ENCODE measurements at regions of chr15 and their contacts with region 1.

Region 1: DNA sequence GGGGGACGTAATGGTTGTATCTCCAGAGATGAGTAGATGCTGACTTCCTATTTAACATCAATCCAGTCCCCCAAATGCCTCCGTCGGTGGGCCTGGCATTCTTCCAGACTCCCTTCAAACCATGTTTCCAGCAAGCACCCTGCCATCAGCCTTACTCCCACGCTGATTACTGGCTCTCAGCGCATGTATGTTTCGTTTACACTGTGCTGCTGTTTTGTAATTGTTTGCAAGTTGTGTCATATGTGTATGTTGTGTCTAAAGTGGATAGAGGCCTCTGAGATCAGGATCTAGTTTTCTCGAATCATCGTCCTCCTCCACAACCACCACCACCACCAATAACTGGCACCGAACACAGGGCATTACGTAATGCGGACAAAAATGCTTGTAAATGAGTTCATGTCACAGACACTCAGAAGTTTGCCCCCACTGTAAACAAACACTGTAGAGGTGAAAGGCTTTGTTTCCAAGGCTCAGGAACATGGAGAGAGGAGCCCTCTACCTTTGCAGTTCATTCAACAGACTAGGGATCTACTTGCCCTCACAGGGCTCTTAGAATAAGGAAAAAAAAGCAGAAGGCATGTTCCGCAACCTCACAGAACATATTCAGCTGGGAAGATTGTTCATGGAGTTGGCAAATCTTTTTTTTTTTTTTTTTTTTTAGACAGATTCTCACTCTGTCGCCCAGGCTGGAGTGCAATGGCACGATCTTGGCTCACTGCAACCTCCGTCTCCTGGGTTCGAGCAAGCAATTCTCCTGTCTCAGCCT is 46.1 kb upstream of the SEMA4B start:
- DNase-seq: peak; percentile 62
- ATAC-seq: peak; percentile 46
- H3K4me3 ChIP-seq: no peak overlapping the region
- H3K27ac ChIP-seq: peak overlapping the region; percentile 79
- H3K4me1 ChIP-seq: peaks cover 45% of the 10 kb centered on the region
- H3K27me3 ChIP-seq: no peaks in the 10 kb centered on the region
- CTCF ChIP-seq: no peak

Region 2: GRCh38 chr15:90095521-90095972 is 59.5 kb before region 1 on chr15:
- CTCF ChIA-PET with region 1: no interaction called
- POLR2A ChIA-PET with region 1: no interaction called
- in situ Hi-C with region 1: no loop called
- intact Hi-C with region 1: no loop called
- DNase-seq: no peak
- ATAC-seq: no peak
- H3K4me3 ChIP-seq: no peak overlapping the region
- H3K27ac ChIP-seq: 0 out of 2 replicates have a peak overlapping the region, but pooled peaks have one; percentile 53
- H3K4me1 ChIP-seq: peaks cover 48% of the 10 kb centered on the region
- H3K27me3 ChIP-seq: no peaks in the 10 kb centered on the region
- CTCF ChIP-seq: no peak

Region 3: DNA sequence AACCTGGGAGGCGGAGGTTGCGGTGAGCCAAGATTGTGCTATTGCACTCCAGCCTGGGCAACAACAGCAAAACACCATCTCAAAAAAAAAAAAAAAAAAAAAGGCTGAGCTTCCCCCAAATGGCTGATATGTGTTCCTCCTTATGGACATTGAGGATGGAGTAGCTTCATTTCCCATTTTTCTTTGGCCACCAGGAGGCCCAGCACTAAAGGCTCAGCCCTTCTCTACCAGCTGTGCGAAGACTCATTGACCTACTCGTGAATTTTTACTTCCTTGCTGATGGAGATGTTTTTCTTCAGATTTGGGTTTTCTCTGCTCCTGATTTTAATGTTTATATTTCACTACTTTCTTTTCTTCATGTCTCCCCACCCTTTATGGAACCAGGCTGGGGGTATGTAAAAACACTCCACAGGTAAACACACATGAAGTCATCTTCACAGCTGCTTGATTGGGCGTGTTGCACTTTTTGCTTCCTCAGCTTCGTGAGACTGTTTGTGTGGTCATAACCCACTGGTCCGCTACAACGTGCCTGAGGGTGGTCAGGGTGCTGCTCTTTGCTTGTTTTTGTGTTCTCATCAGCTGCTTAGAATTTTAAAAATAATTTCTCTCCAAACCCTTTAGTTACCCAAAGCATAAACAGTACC is 59.6 kb after region 1 on chr15:
- CTCF ChIA-PET with region 1: interaction called, 7 read pairs
- POLR2A ChIA-PET with region 1: interaction called, 14 read pairs
- in situ Hi-C with region 1: loop called (anchors 10 kb)
- intact Hi-C with region 1: no loop called
- DNase-seq: no peak
- ATAC-seq: no peak
- H3K4me3 ChIP-seq: no peak overlapping the region
- H3K27ac ChIP-seq: peak overlapping the region; percentile 100
- H3K4me1 ChIP-seq: peaks cover 96% of the 10 kb centered on the region
- H3K27me3 ChIP-seq: no peaks in the 10 kb centered on the region
- CTCF ChIP-seq: no peak

Measured in Panc1 (cell line).